ENCODE measurements at regions of chr17 and their contacts with region 1.

Region 1: DNA sequence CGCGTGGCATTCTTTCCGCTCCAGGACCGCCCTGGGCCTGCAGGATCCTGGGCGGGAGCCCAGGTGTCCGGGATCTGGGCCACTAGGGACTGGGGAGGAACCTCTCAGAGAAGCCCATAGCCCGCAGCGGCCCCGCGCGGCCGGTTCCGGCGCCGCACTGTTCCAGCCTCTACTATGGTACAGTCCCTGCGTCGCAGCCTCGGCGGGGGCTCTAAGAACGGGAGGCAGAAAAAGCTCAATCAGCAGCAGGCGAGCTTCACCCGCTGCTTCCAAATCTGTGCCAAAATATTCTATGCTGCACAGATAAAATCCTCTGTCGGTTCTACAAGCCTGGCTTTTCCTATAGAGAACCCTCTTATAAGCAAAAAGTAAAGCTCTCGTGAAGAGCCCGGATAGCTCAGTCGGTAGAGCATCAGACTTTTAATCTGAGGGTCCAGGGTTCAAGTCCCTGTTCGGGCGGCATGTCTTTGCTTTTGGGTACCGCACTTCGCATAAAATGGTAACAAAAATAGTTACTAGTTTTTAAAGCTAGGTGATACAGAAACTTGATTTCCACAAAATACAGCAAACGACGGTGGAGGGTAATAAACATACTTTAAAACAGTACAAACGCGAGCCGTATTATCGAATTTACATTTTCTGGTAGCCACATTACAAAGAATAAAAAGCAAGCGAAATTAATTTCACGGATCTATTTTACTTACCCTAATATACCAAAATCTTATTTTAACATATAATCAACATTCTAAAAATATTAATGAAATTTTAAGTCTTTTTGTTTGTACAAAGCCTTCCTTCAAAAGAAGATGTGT is 661 bp upstream of the ALOXE3 start:
- DNase-seq: peak; percentile 91
- H3K4me3 ChIP-seq: peak overlapping the region; percentile 84
- H3K27ac ChIP-seq: peak overlapping the region; percentile 85
- H3K4me1 ChIP-seq: peaks cover 59% of the 10 kb centered on the region
- H3K27me3 ChIP-seq: peaks cover 62% of the 10 kb centered on the region
- CTCF ChIP-seq: peak; percentile 94

Region 2: GRCh38 chr17:8189711-8190477 is 70.9 kb after region 1 on chr17 and contains the start of gene BORCS6:
- intact Hi-C with region 1: loop called (anchors 10 kb)
- DNase-seq: peak; percentile 97
- H3K4me3 ChIP-seq: peak within 1 kb of the TSS; percentile 83
- H3K27ac ChIP-seq: peak within 1 kb of the TSS; percentile 95
- H3K4me1 ChIP-seq: peaks cover 57% of the 10 kb centered on the region
- H3K27me3 ChIP-seq: no peaks in the 10 kb centered on the region
- CTCF ChIP-seq: peak; percentile 18
- total RNA-seq, gene BORCS6: 8.4 TPM

Region 3: DNA sequence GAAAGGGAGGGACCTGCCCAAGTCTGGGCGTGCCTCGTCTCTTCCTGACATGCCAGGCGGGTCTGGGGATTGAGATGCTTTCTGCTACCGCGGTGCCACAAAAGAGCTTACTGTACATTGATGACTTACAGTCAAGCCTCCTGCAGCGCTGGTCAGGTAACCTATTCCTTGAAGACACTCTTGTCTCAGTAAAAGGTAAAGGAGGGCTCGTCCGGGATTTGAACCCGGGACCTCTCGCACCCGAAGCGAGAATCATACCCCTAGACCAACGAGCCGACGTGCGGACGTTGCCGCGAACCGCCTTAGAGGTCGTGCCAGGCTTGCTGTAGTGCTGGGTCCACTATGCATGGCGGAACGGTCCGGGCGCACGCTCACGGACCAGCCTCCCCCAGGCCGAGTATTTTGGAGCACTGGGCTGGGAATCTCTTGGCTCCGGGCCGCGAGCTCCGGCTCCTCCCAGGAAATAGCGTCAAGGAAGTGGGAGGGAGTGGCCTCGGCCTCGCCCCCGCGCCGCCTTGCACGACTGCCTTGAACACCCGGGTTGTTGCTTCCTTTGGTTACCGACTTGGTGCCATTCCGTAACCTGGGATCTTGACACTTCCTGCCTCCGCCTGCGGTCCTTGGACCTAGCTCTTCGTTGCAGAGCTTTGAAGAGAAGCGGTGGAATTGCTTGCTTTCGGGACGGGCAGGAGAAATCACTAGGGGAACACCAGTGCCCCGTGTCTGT is 103.8 kb after region 1 on chr17:
- intact Hi-C with region 1: loop called (anchors 2 kb)
- DNase-seq: peak; percentile 95
- H3K4me3 ChIP-seq: peak overlapping the region; percentile 75
- H3K27ac ChIP-seq: peak overlapping the region; percentile 99
- H3K4me1 ChIP-seq: peaks cover 52% of the 10 kb centered on the region
- H3K27me3 ChIP-seq: no peaks in the 10 kb centered on the region
- CTCF ChIP-seq: no peak